Ascending aorta (tissue), 2 donors: ENCODE measurements at regions of chr9 and their contacts with region 1.

Region 1: DNA sequence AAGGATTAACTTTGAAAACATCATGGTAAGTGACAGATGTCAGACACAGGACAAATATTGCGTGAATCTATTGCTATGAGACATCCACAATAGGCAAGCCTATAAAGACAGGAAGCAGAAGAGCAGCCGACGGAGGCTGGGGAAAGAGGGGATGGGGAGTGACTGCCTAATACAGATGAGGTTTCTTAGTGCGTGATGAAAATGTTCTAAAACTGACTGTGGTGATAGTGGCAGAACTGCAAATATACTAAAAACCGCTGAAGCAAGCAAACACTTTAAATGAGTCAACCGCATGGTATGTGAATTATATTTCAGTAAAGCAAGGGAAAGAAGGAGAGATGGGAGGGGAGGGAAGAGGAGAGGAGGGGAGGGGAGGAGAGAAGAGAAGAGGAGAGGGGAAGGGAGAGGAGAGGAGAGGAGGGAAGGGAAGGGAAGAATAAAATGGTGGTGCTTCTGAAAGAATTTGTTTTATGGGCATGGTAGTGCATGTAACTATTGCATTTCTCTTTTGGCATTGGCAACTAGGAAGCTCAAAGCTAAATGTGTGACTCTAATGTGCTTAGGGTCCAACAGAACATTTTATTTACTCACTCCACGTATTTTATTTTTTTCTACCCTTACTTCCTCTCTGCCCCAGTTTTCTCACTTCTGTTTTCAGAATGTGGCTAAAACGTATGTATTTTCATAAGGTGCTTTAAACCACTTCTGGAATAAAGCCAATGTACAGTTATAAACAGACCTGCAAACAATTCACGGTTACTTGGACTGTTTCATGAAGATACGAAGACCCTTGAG is 21.3 kb downstream of the AKNA start:
- DNase-seq: peak in 1 of 2 donors; percentile 69
- H3K4me3 ChIP-seq: no peak overlapping the region
- H3K27ac ChIP-seq: peak overlapping the region; percentile 64 to 66
- H3K4me1 ChIP-seq: peaks cover 0 to 17% of the 10 kb centered on the region in 2 donors
- H3K27me3 ChIP-seq: no peaks in the 10 kb centered on the region
- CTCF ChIP-seq: no peak

Region 2: GRCh38 chr9:114348906-114349482 is 17.5 kb before region 1 on chr9:
- intact Hi-C with region 1: loop called (anchors 2 kb)
- DNase-seq: peak; percentile 89 to 93
- H3K4me3 ChIP-seq: no peak overlapping the region
- H3K27ac ChIP-seq: peak overlapping the region; percentile 70 to 77
- H3K4me1 ChIP-seq: peaks cover 0 to 21% of the 10 kb centered on the region in 2 donors
- H3K27me3 ChIP-seq: no peaks in the 10 kb centered on the region
- CTCF ChIP-seq: no peak

Region 3: GRCh38 chr9:114392749-114393112 is 26.2 kb after region 1 on chr9:
- intact Hi-C with region 1: loop called (anchors 1 kb)
- DNase-seq: no peak
- H3K4me3 ChIP-seq: peak overlapping the region in 1 of 2 donors; percentile 2
- H3K27ac ChIP-seq: peak overlapping the region; percentile 74 to 80
- H3K4me1 ChIP-seq: peaks cover 24 to 61% of the 10 kb centered on the region in 2 donors
- H3K27me3 ChIP-seq: no peaks in the 10 kb centered on the region
- CTCF ChIP-seq: no peak